Activated CD4-positive, alpha-beta T cell treated with anti-CD3 and anti-CD28 coated beads for 36 hours (primary cell): ENCODE measurements at regions of chr1 and their contacts with region 1.

Region 1: GRCh38 chr1:60765204-60765603 is 317.2 kb upstream of the NFIA start:
- DNase-seq: peak; percentile 26
- ATAC-seq: no peak
- H3K4me3 Mint-ChIP-seq: no peak overlapping the region
- H3K27ac Mint-ChIP-seq: no peak overlapping the region
- H3K4me1 Mint-ChIP-seq: no peaks in the 10 kb centered on the region
- H3K27me3 Mint-ChIP-seq: no peaks in the 10 kb centered on the region

Region 2: DNA sequence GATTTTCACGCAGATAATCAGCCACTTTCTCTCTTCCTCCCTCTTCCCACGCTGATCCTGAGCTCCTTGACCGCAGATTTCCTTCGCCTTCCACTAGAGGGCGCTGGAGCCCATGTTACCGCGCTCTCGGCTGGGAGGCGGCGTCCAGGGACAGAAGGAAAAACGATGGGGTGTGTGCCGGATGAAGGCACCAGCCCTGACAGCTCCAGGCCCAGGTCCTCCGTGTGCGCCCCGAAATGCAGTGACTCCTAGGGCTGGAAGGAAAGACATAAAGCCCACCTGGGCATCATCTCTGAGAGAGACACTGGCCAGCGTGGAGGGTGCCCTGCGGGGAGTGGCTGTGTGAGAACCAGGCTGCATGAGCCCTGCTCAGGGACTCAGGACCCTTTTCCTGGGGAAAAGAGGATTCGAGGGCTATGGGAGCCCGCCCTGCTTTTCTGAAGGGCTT is 793.7 kb before region 1 on chr1:
- CTCF ChIA-PET with region 1: interaction called, 5 read pairs
- POLR2A ChIA-PET with region 1: no interaction called
- intact Hi-C with region 1: loop called (anchors 2 to 5 kb)
- DNase-seq: peak; percentile 74
- ATAC-seq: peak; percentile 47
- H3K4me3 Mint-ChIP-seq: no peak overlapping the region
- H3K27ac Mint-ChIP-seq: no peak overlapping the region
- H3K4me1 Mint-ChIP-seq: peaks cover 5% of the 10 kb centered on the region
- H3K27me3 Mint-ChIP-seq: peaks cover 21% of the 10 kb centered on the region

Region 3: GRCh38 chr1:60281360-60281932 is 483.8 kb before region 1 on chr1:
- CTCF ChIA-PET with region 1: interaction called, 3 read pairs
- POLR2A ChIA-PET with region 1: no interaction called
- intact Hi-C with region 1: loop called in 1 of 2 experiments (anchors 1 kb)
- DNase-seq: peak; percentile 66
- ATAC-seq: peak; percentile 93
- H3K4me3 Mint-ChIP-seq: no peak overlapping the region
- H3K27ac Mint-ChIP-seq: no peak overlapping the region
- H3K4me1 Mint-ChIP-seq: peaks cover 9% of the 10 kb centered on the region
- H3K27me3 Mint-ChIP-seq: no peaks in the 10 kb centered on the region

Region 4: DNA sequence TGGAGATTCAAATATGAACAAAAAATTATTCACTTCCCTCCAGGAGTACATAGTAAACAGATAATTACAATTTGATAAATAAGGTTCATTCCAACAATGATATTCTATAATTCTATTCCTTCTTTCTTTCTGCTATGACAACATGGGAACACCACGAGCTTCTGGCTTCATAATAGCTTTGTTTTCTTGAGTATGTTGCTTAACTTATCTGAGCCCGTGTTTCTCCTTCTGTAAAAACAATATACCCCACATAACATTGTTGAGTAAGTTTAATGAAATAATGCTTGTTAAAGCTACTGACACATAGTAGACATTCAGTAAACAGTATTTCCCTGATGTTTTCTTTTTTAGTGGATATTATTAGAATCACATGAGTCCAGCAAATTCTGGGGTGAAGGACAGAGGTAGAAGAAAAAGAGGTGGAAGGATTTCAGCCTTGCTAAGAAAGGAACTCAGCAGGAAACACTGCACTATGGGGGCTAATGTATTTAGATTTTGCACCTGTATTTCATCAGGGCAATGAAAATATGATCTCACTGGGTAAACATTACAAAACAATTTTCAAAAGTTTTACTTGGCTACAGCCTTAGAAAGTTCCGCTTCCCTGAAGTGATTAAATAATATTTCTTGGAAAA is 260.9 kb before region 1 on chr1:
- CTCF ChIA-PET with region 1: no interaction called
- POLR2A ChIA-PET with region 1: no interaction called
- intact Hi-C with region 1: no loop called
- DNase-seq: no peak
- ATAC-seq: no peak
- H3K4me3 Mint-ChIP-seq: no peak overlapping the region
- H3K27ac Mint-ChIP-seq: no peak overlapping the region
- H3K4me1 Mint-ChIP-seq: no peaks in the 10 kb centered on the region
- H3K27me3 Mint-ChIP-seq: no peaks in the 10 kb centered on the region

Region 5: GRCh38 chr1:60969971-60970509 is 204.8 kb after region 1 on chr1:
- CTCF ChIA-PET with region 1: no interaction called
- POLR2A ChIA-PET with region 1: no interaction called
- intact Hi-C with region 1: no loop called
- DNase-seq: no peak
- ATAC-seq: no peak
- H3K4me3 Mint-ChIP-seq: no peak overlapping the region
- H3K27ac Mint-ChIP-seq: no peak overlapping the region
- H3K4me1 Mint-ChIP-seq: no peaks in the 10 kb centered on the region
- H3K27me3 Mint-ChIP-seq: peaks cover 16% of the 10 kb centered on the region